K562 (cell line): ENCODE measurements at regions of chrX and their contacts with region 1.

Region 1: DNA sequence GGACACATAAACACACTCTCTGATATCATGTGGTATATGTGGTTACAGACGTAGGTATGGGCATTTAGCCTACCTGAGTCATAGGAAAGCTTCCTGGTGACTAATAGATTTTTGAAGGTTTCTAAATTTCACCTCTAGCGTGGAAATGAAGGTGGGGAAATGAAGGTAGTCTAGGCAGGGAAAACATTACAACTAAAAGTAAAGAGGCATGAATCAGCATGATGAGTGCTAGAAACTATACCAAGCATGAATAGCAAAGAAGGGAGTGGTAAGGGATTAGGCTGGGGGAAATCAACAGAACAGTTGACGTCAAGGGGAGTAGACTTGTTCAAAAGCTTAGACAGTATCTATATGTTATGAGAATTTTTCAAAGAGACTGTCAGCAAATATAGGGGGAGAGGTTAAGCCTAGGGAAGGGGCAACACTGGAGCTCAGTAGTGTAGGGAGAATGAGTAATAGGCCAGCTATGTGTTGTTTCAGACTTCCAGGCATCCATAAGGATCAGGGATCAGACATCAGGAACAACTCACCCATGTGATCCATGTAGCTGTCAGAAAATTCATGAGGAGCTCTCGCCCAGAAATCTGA is 279.3 kb upstream of the DIPK2B start:
- DNase-seq: no peak
- ATAC-seq: no peak
- H3K4me3 ChIP-seq: no peak overlapping the region
- H3K27ac ChIP-seq: no peak overlapping the region
- H3K4me1 ChIP-seq: no peaks in the 10 kb centered on the region
- H3K27me3 ChIP-seq: no peaks in the 10 kb centered on the region
- CTCF ChIP-seq: no peak
- EP300 ChIP-seq: no peak
- POLR2A ChIP-seq: no peak
- RAD21 ChIP-seq: no peak

Region 2: GRCh38 chrX:45295259-45295986 is 184.5 kb before region 1 on chrX:
- CTCF ChIA-PET with region 1: no interaction called
- POLR2A ChIA-PET with region 1: no interaction called
- in situ Hi-C with region 1: no loop called
- intact Hi-C with region 1: no loop called
- DNase-seq: no peak
- ATAC-seq: no peak
- H3K4me3 ChIP-seq: no peak overlapping the region
- H3K27ac ChIP-seq: no peak overlapping the region
- H3K4me1 ChIP-seq: no peaks in the 10 kb centered on the region
- H3K27me3 ChIP-seq: no peaks in the 10 kb centered on the region
- CTCF ChIP-seq: no peak
- EP300 ChIP-seq: no peak
- POLR2A ChIP-seq: no peak
- RAD21 ChIP-seq: no peak

Region 3: DNA sequence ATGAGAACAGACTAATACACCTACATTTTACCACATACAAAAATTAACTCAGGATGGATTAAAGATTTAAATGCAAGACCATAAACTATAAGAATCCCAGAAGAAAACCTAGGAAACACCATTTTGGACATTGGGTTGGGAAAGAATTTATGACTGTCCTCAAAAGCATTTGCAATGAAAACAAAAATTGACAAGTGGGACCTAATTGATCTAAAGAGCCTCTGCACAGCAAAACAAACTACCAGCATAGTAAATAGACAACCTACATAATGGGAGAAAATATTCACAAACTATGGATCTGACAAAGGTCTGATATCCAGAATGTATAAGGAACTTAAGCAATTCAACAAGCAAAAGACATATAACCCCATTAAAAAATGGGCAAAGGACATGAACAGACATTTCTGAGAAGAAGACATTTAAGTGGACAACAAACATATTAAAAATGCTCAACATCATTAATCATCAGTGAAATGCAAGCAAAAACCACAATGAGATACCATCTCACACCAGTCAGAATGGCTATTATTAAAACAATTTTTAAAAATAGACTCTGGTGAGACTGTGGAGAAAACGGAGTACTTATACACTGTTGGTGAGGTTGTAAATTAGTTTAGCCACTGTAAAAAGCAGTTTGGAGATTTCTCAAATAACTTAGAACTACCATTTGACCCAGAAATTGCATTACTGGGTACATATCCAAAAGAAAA is 57.6 kb before region 1 on chrX:
- CTCF ChIA-PET with region 1: no interaction called
- POLR2A ChIA-PET with region 1: no interaction called
- in situ Hi-C with region 1: no loop called
- intact Hi-C with region 1: loop called (anchors 2 kb)
- DNase-seq: no peak
- ATAC-seq: no peak
- H3K4me3 ChIP-seq: no peak overlapping the region
- H3K27ac ChIP-seq: no peak overlapping the region
- H3K4me1 ChIP-seq: no peaks in the 10 kb centered on the region
- H3K27me3 ChIP-seq: no peaks in the 10 kb centered on the region
- CTCF ChIP-seq: no peak
- EP300 ChIP-seq: no peak
- POLR2A ChIP-seq: no peak
- RAD21 ChIP-seq: no peak

Region 4: DNA sequence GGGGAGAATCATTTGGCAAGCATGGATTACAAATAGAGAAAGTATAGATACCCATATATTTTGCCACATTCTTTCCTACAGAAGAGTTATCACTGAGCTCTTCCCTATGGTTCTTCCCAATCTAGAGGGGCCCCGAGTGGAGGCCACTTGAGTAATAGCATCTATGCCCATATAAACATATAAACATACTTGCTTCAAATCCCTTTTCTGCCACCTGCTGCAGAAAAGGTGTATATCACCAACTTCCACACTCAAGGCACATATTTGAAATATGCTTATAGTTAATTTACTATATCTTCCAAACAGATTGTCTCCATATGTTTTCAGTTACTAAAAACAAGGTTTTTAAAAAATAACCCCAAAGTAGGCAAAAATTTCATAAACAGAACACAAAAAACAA is 363.6 kb after region 1 on chrX:
- CTCF ChIA-PET with region 1: no interaction called
- POLR2A ChIA-PET with region 1: no interaction called
- in situ Hi-C with region 1: no loop called
- intact Hi-C with region 1: no loop called
- DNase-seq: no peak
- ATAC-seq: no peak
- H3K4me3 ChIP-seq: no peak overlapping the region
- H3K27ac ChIP-seq: no peak overlapping the region
- H3K4me1 ChIP-seq: no peaks in the 10 kb centered on the region
- H3K27me3 ChIP-seq: no peaks in the 10 kb centered on the region
- CTCF ChIP-seq: no peak
- EP300 ChIP-seq: no peak
- POLR2A ChIP-seq: no peak
- RAD21 ChIP-seq: no peak